ENCODE measurements at regions of chr20 and their contacts with region 1.

Region 1: GRCh38 chr20:49344975-49345374 is 67.1 kb upstream of the ZNFX1 start:
- DNase-seq: peak; percentile 92
- H3K4me3 Mint-ChIP-seq: peak overlapping the region; percentile 50
- H3K27ac Mint-ChIP-seq: peak overlapping the region; percentile 91
- H3K4me1 Mint-ChIP-seq: peaks cover 44% of the 10 kb centered on the region
- H3K27me3 Mint-ChIP-seq: no peaks in the 10 kb centered on the region
- CTCF ChIP-seq: no peak

Region 2: DNA sequence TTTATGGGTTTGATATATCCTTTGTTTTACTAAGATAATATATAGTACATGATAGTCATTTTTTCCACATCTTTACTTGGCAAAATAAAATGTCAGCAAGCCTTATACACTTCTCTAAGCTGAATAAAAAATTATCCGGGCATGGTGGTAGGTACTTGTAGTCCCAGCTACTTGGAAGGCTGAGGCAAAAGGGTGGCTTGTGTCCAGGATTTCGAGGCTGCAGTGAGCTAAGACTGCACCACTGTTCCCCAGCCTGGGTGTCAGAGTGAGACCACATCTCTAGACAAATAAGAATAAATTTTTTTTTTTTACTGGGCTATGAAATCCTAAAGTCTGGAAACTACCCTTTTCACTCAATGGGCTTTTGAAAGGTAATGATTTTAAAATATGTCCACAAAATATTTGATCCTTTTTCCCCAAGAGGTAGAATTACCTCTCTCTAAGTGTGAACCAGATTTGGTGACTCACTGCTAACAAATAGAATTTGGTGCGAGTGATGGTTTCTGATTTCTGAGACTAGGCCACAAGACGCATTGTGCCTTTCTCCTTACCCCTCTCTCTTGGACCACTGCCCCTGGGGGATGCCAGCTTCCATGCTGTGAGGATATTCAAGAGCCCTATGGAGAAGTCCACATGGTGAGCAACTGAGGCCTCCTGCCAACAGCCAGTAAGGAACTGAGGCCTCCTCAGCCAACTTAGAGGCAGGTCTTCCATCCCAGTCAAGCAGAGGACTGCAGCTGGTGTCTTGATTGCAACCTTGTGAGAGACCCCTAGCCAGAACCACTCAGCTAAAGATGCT is 17.1 kb after region 1 on chr20:
- CTCF ChIA-PET with region 1: interaction called, 8 read pairs
- POLR2A ChIA-PET with region 1: interaction called, 18 read pairs
- intact Hi-C with region 1: no loop called
- DNase-seq: no peak
- H3K4me3 Mint-ChIP-seq: no peak overlapping the region
- H3K27ac Mint-ChIP-seq: no peak overlapping the region
- H3K4me1 Mint-ChIP-seq: peaks cover 7% of the 10 kb centered on the region
- H3K27me3 Mint-ChIP-seq: no peaks in the 10 kb centered on the region
- CTCF ChIP-seq: no peak

Region 3: DNA sequence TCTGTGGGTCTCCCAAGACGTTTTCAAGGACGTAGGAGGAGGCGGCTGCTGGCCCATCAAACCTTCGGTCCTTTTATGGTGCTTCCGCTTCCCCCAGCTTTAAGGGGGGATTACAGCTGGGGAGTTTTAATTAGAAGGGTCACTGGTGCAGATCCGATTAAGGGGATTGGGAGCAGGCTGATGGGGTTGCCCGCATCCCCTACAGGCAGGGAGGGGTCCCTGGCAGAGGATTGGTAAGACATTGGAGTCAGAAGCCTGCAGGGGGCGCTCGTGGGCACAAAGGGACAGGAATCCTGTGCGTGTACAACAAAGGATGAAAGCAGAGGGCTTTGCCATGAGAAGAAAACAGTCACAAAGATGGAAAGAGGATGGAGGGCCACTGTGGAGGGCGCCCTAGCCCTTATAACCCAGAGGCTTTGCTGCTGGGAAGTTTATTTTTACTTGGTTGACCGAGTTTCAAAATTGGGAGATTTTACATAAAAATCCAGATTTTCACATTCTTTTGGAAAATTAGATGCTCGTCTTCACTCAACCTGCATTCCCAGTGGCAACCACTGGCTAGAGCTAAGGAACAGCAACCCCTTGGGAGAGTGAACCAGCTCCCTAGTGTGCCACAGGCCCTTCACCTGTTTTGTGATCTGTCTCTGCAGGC is 39.6 kb after region 1 on chr20:
- CTCF ChIA-PET with region 1: interaction called, 13 read pairs
- POLR2A ChIA-PET with region 1: interaction called, 51 read pairs
- intact Hi-C with region 1: loop called (anchors 5 kb)
- DNase-seq: peak; percentile 83
- H3K4me3 Mint-ChIP-seq: no peak overlapping the region
- H3K27ac Mint-ChIP-seq: no peak overlapping the region
- H3K4me1 Mint-ChIP-seq: peaks cover 57% of the 10 kb centered on the region
- H3K27me3 Mint-ChIP-seq: no peaks in the 10 kb centered on the region
- CTCF ChIP-seq: peak; percentile 59

Region 4: GRCh38 chr20:49424536-49424935 is 79.6 kb after region 1 on chr20:
- CTCF ChIA-PET with region 1: interaction called, 3 read pairs
- POLR2A ChIA-PET with region 1: interaction called, 11 read pairs
- intact Hi-C with region 1: no loop called
- DNase-seq: no peak
- H3K4me3 Mint-ChIP-seq: no peak overlapping the region
- H3K27ac Mint-ChIP-seq: no peak overlapping the region
- H3K4me1 Mint-ChIP-seq: peaks cover 29% of the 10 kb centered on the region
- H3K27me3 Mint-ChIP-seq: no peaks in the 10 kb centered on the region
- CTCF ChIP-seq: no peak

Measured in MCF 10A (cell line).